Activated B cell treated with CpG ODN at 0.5 μM for 24 hours (primary cell): ENCODE measurements at regions of chr18 and their contacts with region 1.

Region 1: GRCh38 chr18:12376718-12377555 is at the start of gene AFG3L2:
- DNase-seq: peak; percentile 100
- ATAC-seq: peak; percentile 88
- H3K4me3 Mint-ChIP-seq: peak within 1 kb of the TSS; percentile 90
- H3K27ac Mint-ChIP-seq: peak within 1 kb of the TSS; percentile 84
- H3K4me1 Mint-ChIP-seq: peaks cover 41% of the 10 kb centered on the region
- H3K27me3 Mint-ChIP-seq: no peaks in the 10 kb centered on the region
- CTCF ChIP-seq: no peak
- total RNA-seq, gene AFG3L2: 48.0 and 49.9 TPM in 2 replicates

Region 2: DNA sequence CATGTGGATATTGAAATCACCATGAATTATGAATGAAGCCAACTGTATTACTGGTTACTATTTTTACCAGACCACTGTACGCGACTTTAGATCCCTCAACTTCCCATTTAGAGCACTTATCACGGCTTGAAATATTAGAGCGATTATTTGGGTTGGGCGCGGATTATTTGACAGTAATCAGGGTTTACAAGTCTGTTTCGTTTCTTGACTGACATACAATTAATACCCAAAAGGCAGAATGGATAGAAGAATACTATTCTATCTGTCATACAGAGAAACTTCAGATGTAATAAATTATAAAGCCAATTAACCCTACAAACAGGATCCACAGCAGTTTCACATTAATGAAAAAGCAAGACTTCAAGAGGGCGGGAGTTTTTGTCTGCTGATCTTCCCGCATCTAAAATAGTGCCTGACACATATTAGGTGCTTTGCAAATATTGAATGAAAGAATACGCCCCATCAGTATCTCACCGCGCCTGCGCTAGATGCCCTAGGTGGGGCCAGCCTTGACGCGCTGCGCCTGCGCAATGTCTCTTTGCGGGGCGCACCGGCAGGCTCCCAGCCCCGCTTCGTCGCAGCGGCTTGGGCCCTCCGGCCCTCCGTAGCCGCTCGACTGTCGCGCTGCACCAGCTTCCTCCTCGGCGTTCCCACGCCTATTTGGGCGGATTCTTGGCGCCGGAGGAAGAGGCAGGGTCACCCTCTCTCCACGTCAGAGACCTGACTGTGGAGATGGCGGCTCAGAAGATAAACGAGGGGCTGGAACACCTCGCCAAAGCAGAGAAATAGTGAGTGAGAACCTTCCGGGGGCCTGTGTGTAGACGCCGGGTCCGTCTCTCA is 1851.3 kb before region 1 on chr18 and contains the start of gene NAPG:
- CTCF ChIA-PET with region 1: no interaction called
- POLR2A ChIA-PET with region 1: no interaction called
- intact Hi-C with region 1: loop called (anchors 10 kb)
- DNase-seq: peak; percentile 86
- ATAC-seq: peak; percentile 91
- H3K4me3 Mint-ChIP-seq: peak within 1 kb of the TSS; percentile 99
- H3K27ac Mint-ChIP-seq: peak within 1 kb of the TSS; percentile 96
- H3K4me1 Mint-ChIP-seq: peaks cover 49% of the 10 kb centered on the region
- H3K27me3 Mint-ChIP-seq: no peaks in the 10 kb centered on the region
- CTCF ChIP-seq: no peak
- total RNA-seq, gene NAPG: 24.5 and 33.3 TPM in 2 replicates

Region 3: GRCh38 chr18:12049978-12050811 is 326.7 kb before region 1 on chr18:
- CTCF ChIA-PET with region 1: no interaction called
- POLR2A ChIA-PET with region 1: interaction called, 4 read pairs
- intact Hi-C with region 1: loop called (anchors 2 kb)
- DNase-seq: peak; percentile 34
- ATAC-seq: peak; percentile 88
- H3K4me3 Mint-ChIP-seq: peak overlapping the region; percentile 70
- H3K27ac Mint-ChIP-seq: peak overlapping the region; percentile 79
- H3K4me1 Mint-ChIP-seq: peaks cover 55% of the 10 kb centered on the region
- H3K27me3 Mint-ChIP-seq: no peaks in the 10 kb centered on the region
- CTCF ChIP-seq: no peak

Region 4: DNA sequence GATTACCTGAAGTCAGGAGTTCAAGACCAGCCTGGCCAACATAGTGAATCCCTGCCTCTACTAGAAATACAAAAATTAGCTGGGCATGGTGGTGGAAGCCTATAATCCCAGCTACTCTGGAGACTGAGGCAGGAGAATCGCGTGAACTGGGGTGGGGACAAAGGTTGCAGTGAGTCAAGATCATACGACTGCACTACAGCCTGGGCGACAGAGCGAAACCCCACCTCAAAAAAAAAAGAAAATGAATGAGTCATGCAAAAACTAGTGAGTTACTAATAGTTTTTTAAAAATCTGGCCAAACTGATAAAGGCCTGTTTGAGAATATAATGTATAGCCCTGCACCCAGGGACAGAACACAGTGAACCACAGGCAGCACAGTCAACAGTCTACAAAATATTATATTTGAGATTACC is 17.4 kb before region 1 on chr18:
- CTCF ChIA-PET with region 1: no interaction called
- POLR2A ChIA-PET with region 1: interaction called, 5 read pairs
- intact Hi-C with region 1: loop called (anchors 2 kb)
- DNase-seq: no peak
- ATAC-seq: peak; percentile 31
- H3K4me3 Mint-ChIP-seq: no peak overlapping the region
- H3K27ac Mint-ChIP-seq: no peak overlapping the region
- H3K4me1 Mint-ChIP-seq: peaks cover 4% of the 10 kb centered on the region
- H3K27me3 Mint-ChIP-seq: no peaks in the 10 kb centered on the region
- CTCF ChIP-seq: no peak

Region 5: GRCh38 chr18:12531749-12532148 is 154.8 kb after region 1 on chr18:
- CTCF ChIA-PET with region 1: no interaction called
- POLR2A ChIA-PET with region 1: no interaction called
- intact Hi-C with region 1: no loop called
- DNase-seq: no peak
- ATAC-seq: no peak
- H3K4me3 Mint-ChIP-seq: no peak overlapping the region
- H3K27ac Mint-ChIP-seq: no peak overlapping the region
- H3K4me1 Mint-ChIP-seq: no peaks in the 10 kb centered on the region
- H3K27me3 Mint-ChIP-seq: no peaks in the 10 kb centered on the region
- CTCF ChIP-seq: no peak

Region 6: DNA sequence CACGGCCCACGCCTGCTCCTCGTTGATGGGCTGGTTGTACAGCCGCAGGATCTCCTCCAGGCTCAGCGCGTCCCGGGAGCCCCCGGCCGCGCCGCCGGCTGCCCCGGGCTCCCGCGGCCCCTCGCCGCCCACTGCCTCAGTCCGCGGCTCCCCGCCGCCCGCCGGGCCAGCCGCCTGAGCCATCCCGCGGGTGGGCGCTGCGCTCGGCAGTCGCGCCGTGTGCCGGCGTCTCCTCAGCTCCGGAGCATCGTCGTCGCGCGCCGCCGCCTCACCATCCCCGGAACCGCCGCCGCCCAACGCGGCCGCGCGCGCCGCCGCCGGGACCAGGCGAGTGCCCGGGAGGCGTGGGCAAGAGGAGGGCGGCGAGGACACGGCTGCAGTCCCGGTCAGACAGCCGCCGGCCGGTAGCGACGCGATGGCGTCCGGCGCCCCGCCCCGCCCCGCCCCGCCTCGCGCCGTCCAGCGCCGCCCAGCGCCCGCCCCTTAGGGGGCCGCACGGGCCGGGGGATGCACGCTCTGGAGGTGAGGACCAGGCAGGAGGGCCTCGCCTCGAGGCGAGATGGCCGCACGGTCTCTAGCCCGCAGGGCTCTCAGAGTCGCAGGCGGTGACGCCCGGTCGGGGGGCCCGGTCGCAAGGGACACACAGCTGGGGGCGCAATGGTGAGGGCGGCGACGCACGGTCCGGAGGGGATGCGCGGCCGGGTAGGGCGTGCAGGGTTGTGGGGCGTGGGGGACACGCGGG is 280.9 kb after region 1 on chr18 and contains the start of gene SPIRE1:
- CTCF ChIA-PET with region 1: no interaction called
- POLR2A ChIA-PET with region 1: no interaction called
- intact Hi-C with region 1: loop called (anchors 1 kb)
- DNase-seq: peak; percentile 52
- ATAC-seq: peak; percentile 74
- H3K4me3 Mint-ChIP-seq: peak within 1 kb of the TSS; percentile 86
- H3K27ac Mint-ChIP-seq: peak within 1 kb of the TSS; percentile 69
- H3K4me1 Mint-ChIP-seq: peaks cover 10% of the 10 kb centered on the region
- H3K27me3 Mint-ChIP-seq: peaks cover 28% of the 10 kb centered on the region
- CTCF ChIP-seq: no peak
- total RNA-seq, gene SPIRE1: 2.5 and 2.9 TPM in 2 replicates

Region 7: DNA sequence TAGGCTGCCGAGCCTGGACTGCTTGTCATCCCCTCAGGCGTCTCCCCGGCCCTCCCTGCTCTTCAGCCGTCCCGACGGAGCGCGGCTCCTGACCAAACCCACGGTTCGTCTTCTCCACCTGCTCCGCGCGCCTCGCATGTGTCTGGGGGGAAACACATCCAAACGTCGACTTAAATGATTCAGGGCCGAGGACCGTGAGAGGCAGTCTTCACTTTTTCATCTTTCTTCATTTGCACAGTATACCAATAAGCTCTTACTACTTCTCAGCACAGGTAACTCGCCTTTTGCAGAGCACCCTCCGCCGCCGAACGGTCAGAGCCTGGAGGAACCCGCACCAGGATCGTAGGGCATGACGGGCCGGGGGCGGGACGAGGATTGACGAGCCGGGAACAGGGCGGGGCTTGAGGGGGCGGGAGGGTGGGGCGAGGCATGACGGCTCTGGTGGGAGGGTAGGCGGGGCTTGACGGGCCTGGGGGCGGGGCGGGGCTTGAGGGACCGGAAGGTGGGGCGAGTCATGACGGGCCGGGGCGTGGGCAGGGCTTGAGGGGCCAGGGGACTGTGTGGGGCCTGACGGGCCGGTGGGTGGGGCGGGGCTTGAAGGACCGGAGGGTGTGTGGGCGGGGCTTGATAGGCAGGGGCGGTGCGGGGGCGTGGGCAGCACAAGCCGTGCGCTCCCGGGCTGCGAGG is 570.6 kb after region 1 on chr18 and contains the start of gene SEH1L:
- CTCF ChIA-PET with region 1: no interaction called
- POLR2A ChIA-PET with region 1: interaction called, 19 read pairs
- intact Hi-C with region 1: loop called (anchors 1 kb)
- DNase-seq: peak; percentile 96
- ATAC-seq: peak; percentile 90
- H3K4me3 Mint-ChIP-seq: peak within 1 kb of the TSS; percentile 96
- H3K27ac Mint-ChIP-seq: peak within 1 kb of the TSS; percentile 97
- H3K4me1 Mint-ChIP-seq: peaks cover 24% of the 10 kb centered on the region
- H3K27me3 Mint-ChIP-seq: no peaks in the 10 kb centered on the region
- CTCF ChIP-seq: no peak
- total RNA-seq, gene SEH1L: 67.0 and 79.3 TPM in 2 replicates

Region 8: DNA sequence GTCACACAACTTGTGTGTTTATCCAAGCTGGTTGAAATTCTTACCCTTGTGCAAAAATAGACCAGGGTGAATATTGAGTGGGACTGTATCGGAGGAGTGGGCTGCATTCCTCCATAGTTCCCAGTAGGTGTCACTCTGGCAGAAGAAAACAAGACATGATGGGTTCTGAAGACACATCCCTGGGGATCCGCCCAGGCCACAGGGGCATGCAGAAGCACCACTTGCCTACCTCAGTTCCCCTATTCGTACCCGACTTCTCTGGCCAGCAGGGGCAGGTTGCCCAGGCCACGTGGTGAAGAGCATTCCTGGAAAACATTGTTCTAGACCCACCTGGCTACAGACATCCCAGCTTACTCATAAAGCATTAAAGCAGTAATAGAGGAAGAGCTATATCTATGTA is 1181.2 kb after region 1 on chr18:
- CTCF ChIA-PET with region 1: no interaction called
- POLR2A ChIA-PET with region 1: no interaction called
- intact Hi-C with region 1: loop called (anchors 2 kb)
- DNase-seq: peak; percentile 56
- ATAC-seq: peak; percentile 60
- H3K4me3 Mint-ChIP-seq: peak overlapping the region; percentile 52
- H3K27ac Mint-ChIP-seq: peak overlapping the region; percentile 77
- H3K4me1 Mint-ChIP-seq: peaks cover 46% of the 10 kb centered on the region
- H3K27me3 Mint-ChIP-seq: no peaks in the 10 kb centered on the region
- CTCF ChIP-seq: peak; percentile 51